ENCODE measurements at regions of chr14 and their contacts with region 1.

Region 1: DNA sequence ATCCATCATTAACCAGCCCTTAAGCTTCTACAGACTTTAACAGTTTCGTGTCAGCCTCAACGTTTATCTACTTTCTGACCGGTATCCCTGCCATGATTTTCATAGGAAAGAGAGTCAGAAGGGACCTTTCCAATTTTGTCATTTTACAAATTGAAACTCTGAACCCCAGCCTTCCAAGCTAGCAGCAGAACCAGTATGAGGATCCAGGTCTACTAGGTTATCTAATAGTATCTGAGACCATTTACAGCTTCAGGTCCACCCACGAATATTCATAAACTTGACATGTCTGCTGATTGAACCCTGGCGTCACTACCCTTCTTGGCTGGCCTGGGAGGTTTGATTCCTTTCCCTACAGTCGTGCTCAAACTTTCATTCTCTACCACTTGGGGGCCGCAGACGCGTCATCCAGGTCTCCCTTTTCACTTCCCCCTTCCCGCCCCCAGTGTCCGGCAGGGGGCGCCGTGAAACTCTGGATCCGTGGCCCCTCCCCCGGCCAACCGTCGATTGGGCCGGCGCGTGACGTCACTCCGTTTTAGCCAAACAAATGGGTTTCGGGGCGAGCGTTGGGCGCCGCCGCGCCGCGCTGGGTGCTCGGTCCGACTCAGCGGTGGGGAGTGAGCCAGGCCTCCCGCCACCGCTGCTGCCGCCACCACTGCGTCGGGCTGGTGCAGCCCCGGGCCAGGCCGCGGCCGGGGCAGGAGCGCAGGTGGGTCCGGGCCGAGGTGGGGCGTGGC is at the start of gene FBXO34:
- DNase-seq: peak; percentile 99
- H3K4me3 Mint-ChIP-seq: peak within 1 kb of the TSS; percentile 90
- H3K27ac Mint-ChIP-seq: peak within 1 kb of the TSS; percentile 94
- H3K4me1 Mint-ChIP-seq: peaks cover 44% of the 10 kb centered on the region
- H3K27me3 Mint-ChIP-seq: peaks cover 2% of the 10 kb centered on the region
- total RNA-seq, gene FBXO34: 24.7 and 26.6 TPM in 2 replicates

Region 2: GRCh38 chr14:55191203-55192053 is 79.6 kb before region 1 on chr14 and contains the start of gene DLGAP5:
- intact Hi-C with region 1: loop called (anchors 2 kb)
- DNase-seq: peak; percentile 91
- H3K4me3 Mint-ChIP-seq: peak within 1 kb of the TSS; percentile 94
- H3K27ac Mint-ChIP-seq: peak within 1 kb of the TSS; percentile 66
- H3K4me1 Mint-ChIP-seq: peaks cover 43% of the 10 kb centered on the region
- H3K27me3 Mint-ChIP-seq: no peaks in the 10 kb centered on the region
- total RNA-seq, gene DLGAP5: 22.4 and 26.4 TPM in 2 replicates

Region 3: GRCh38 chr14:55201224-55202050 is 69.6 kb before region 1 on chr14:
- intact Hi-C with region 1: no loop called
- DNase-seq: no peak
- H3K4me3 Mint-ChIP-seq: no peak overlapping the region
- H3K27ac Mint-ChIP-seq: no peak overlapping the region
- H3K4me1 Mint-ChIP-seq: no peaks in the 10 kb centered on the region
- H3K27me3 Mint-ChIP-seq: peaks cover 27% of the 10 kb centered on the region

Region 4: DNA sequence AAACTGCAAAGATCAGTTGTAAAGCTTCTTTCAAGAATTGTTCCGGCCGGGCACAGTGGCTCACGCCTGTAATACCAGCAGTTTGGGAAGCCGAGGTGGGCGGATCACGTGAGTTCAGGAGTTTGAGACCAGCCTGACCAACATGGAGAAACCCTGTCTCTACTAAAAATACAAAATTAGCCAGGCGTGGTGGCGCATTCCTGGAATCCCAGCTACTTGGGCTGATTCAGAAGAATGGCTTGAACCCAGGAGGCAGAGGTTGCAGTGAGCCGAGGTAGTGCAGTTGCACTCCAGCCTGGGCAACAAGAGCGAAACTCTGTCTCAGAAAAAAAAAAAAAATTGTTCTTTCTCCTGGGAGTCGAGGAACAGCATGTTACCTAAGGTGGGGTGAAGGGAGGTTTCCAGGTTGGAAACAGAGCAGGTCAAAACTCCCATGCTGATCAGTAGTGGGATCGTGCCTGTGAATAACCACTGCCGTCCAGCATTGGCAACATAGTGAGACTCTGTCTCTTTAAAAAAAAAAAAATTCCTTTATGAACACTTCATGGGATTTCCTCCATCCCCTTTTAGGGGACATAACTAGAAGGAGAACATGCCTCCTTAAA is 14.2 kb after region 1 on chr14:
- intact Hi-C with region 1: loop called (anchors 2 kb)
- DNase-seq: no peak
- H3K4me3 Mint-ChIP-seq: no peak overlapping the region
- H3K27ac Mint-ChIP-seq: no peak overlapping the region
- H3K4me1 Mint-ChIP-seq: peaks cover 11% of the 10 kb centered on the region
- H3K27me3 Mint-ChIP-seq: no peaks in the 10 kb centered on the region

Region 5: GRCh38 chr14:55316567-55316966 is 45.6 kb after region 1 on chr14:
- intact Hi-C with region 1: no loop called
- DNase-seq: no peak
- H3K4me3 Mint-ChIP-seq: no peak overlapping the region
- H3K27ac Mint-ChIP-seq: no peak overlapping the region
- H3K4me1 Mint-ChIP-seq: peaks cover 7% of the 10 kb centered on the region
- H3K27me3 Mint-ChIP-seq: no peaks in the 10 kb centered on the region

Region 6: GRCh38 chr14:55333711-55334485 is 62.9 kb after region 1 on chr14:
- intact Hi-C with region 1: loop called (anchors 1 kb)
- DNase-seq: no peak
- H3K4me3 Mint-ChIP-seq: peak overlapping the region; percentile 62
- H3K27ac Mint-ChIP-seq: peak overlapping the region; percentile 77
- H3K4me1 Mint-ChIP-seq: peaks cover 85% of the 10 kb centered on the region
- H3K27me3 Mint-ChIP-seq: no peaks in the 10 kb centered on the region

Region 7: GRCh38 chr14:55373784-55374705 is 103.0 kb after region 1 on chr14:
- intact Hi-C with region 1: loop called (anchors 1 kb)
- DNase-seq: peak; percentile 35
- H3K4me3 Mint-ChIP-seq: peak overlapping the region; percentile 64
- H3K27ac Mint-ChIP-seq: peak overlapping the region; percentile 99
- H3K4me1 Mint-ChIP-seq: peaks cover 57% of the 10 kb centered on the region
- H3K27me3 Mint-ChIP-seq: no peaks in the 10 kb centered on the region

Region 8: GRCh38 chr14:55430024-55430690 is 159.2 kb after region 1 on chr14:
- intact Hi-C with region 1: loop called (anchors 1 kb)
- DNase-seq: peak; percentile 32
- H3K4me3 Mint-ChIP-seq: no peak overlapping the region
- H3K27ac Mint-ChIP-seq: no peak overlapping the region
- H3K4me1 Mint-ChIP-seq: peaks cover 21% of the 10 kb centered on the region
- H3K27me3 Mint-ChIP-seq: peaks cover 3% of the 10 kb centered on the region